ENCODE measurements at regions of chr2 and their contacts with region 1.

Region 1: DNA sequence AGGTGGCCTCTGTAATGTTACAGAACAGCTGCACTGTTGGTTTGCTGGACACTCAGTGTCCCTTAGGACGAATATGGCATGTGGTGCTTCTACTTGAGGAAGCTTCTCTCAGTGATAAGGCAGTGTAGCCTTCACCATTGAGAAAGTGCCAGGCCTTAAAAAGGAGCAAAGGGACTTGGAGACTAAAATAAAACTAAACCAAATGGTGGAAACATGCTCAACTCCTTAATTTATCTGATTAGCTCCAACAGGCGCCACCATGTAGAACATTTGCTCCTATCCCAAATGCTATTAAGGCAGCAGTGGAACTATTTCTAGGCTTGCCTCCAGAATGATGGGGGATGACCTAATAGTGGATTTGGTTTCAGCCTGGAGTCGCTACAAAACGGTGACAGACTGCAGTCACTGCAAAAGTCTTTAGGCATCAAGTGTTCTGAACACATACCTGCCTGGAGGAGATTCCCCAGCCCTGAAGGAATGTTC is 77.5 kb upstream of the MYL1 start:
- DNase-seq: no peak
- H3K4me3 ChIP-seq: no peak overlapping the region
- H3K27ac ChIP-seq: no peak overlapping the region
- H3K4me1 ChIP-seq: no peaks in the 10 kb centered on the region
- H3K27me3 ChIP-seq: no peaks in the 10 kb centered on the region
- CTCF ChIP-seq: no peak

Region 2: DNA sequence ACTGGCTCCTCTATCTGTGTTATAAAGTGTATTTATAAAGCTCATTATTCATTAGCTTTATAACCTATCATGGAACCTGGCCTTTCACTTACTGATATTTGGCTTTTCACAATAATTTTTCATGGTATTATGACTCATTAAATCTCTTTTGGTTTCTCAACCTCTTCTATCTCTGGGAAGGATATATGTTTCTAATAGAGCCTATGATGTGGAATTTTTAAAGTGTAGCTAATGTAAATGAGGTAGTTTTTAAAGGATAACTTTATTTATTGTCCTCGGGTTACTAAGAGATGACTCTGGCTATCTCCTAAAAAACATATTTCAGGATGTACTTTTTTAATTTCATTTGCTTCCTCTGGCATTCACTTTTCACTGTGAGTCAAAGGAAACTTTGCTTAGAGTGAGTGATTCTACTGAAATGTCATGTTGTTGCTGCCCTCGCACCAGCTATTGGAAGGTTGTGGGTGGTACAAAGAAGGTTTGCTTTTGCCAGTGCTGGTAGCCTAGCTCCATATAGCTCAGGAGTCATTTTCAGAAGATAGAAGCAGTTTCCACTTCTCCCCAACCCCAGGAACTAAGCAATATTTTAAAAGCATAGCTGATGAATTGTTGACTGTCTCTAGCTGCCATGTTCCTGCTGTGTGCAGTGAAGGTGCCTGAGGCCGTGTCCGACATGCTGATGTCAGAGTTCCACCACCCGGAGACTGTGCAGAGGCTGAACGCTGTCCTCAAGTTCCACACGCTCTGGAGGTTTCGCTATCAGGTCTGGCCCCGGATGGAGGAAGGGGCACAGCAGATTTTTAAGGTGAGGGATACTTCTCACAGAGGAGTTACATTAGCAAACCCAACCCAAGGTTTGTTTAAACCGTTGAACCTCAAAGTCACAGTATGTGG is 475.1 kb before region 1 on chr2:
- intact Hi-C with region 1: no loop called
- DNase-seq: no peak
- H3K4me3 ChIP-seq: no peak overlapping the region
- H3K27ac ChIP-seq: no peak overlapping the region
- H3K4me1 ChIP-seq: no peaks in the 10 kb centered on the region
- H3K27me3 ChIP-seq: no peaks in the 10 kb centered on the region
- CTCF ChIP-seq: no peak

Region 3: GRCh38 chr2:209965723-209966122 is 426.8 kb before region 1 on chr2:
- intact Hi-C with region 1: loop called (anchors 5 kb)
- DNase-seq: no peak
- H3K4me3 ChIP-seq: no peak overlapping the region
- H3K27ac ChIP-seq: no peak overlapping the region
- H3K4me1 ChIP-seq: peaks cover 0 to 2% (median 0%) of the 10 kb centered on the region in 4 donors
- H3K27me3 ChIP-seq: peaks cover 0 to 3% of the 10 kb centered on the region in 2 donors
- CTCF ChIP-seq: no peak

Region 4: GRCh38 chr2:212254339-212254738 is 1861.8 kb after region 1 on chr2:
- intact Hi-C with region 1: loop called (anchors 5 kb)
- DNase-seq: no peak
- H3K4me3 ChIP-seq: no peak overlapping the region
- H3K27ac ChIP-seq: no peak overlapping the region
- H3K4me1 ChIP-seq: no peaks in the 10 kb centered on the region
- H3K27me3 ChIP-seq: no peaks in the 10 kb centered on the region
- CTCF ChIP-seq: no peak